Astrocyte of the cerebellum (primary cell): ENCODE measurements at regions of chr18 and their contacts with region 1.

Region 1: DNA sequence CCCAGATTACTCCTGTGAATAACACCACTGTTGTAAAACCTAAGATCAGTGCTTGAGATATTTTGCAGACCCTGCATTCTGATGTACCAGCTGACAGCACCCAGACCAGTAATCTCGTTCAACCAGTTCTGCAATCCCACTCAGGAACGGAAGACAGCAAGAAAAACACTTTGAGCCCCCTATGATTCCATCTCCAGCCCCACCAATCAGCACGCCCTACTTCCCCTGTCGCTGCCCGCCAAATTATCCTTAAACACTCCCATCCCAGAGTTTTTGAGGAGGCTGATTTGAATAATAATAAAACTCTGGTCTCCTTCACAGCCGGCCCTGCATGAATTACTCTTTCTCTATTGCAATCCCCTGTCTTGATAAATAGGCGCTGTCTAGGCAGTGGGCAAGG is 173.9 kb upstream of the CDH2 start:
- DNase-seq: no peak
- H3K4me3 ChIP-seq: no peak overlapping the region
- CTCF ChIP-seq: no peak

Region 2: DNA sequence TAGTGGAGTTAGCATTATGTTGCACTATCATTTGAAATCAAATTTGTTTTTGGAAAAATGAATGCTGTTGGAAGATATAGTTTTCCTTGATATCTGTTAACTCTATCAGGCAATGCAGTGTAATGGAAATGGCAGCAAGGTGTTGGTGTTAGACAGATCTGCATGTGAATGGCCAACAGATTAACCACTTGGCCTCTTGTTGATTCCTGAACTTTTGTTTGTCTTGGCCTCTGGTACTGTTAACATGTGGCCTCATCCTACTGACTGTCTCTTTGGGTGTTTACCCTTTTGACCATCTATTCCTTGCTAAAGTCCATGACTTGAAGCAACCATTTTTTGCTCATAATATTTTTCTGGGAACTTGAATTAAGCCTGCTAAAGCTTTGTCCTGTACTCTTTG is 63.7 kb before region 1 on chr18:
- in situ Hi-C with region 1: loop called (anchors 5 kb)
- DNase-seq: no peak
- H3K4me3 ChIP-seq: no peak overlapping the region
- CTCF ChIP-seq: no peak

Region 3: GRCh38 chr18:28407681-28408080 is 56.9 kb after region 1 on chr18:
- in situ Hi-C with region 1: no loop called
- DNase-seq: peak; percentile 57
- H3K4me3 ChIP-seq: no peak overlapping the region
- CTCF ChIP-seq: no peak